Activated CD4-positive, alpha-beta T cell treated with anti-CD3 and anti-CD28 coated beads for 36 hours (primary cell): ENCODE measurements at regions of chr10 and their contacts with region 1.

Region 1: DNA sequence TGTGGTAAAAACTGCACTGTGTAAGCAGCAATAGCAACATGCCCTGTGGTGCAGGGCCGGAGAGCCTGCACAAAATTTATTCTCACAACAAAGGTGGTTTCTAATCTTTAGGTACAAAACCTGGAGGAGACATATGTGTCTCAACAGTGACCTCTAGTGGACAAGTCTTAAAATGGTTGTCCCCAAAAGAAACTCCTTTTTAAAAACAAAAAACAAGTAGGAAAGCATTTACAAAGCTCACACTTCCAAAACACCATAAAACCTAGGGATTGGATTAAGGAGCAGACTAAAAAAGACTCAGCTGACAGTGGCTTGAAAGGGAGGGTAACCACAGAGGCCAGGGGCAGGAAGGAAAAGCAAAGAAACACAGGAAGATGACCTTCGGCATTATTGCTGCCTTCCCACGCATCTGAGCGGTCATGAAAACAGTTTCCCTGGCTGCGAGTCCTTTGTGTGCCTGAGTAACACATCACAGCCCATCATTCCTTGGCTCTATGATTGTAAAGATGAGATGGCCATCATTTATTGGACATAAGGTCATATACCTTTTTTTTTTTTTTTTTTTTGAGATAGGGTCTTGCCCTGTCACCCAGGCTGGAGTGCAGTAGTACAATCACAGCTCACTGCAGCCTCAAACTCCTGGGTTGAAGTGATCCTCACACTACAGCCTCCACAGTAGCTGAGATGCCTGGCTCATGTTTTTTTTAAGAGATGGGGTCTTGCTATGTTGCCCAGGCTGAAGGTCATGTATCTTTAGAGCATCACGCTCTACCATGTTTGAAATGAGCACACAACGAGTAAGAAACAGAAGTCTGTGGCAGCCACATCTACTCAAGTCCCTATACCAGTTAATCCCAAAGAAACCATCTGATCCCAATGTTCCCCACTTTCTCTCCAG is 39.5 kb downstream of the RSU1 start:
- DNase-seq: no peak
- ATAC-seq: no peak
- H3K4me3 Mint-ChIP-seq: no peak overlapping the region
- H3K27ac Mint-ChIP-seq: peak overlapping the region; percentile 76
- H3K4me1 Mint-ChIP-seq: peaks cover 33% of the 10 kb centered on the region
- H3K27me3 Mint-ChIP-seq: no peaks in the 10 kb centered on the region

Region 2: GRCh38 chr10:15433850-15434537 is 1343.7 kb before region 1 on chr10:
- CTCF ChIA-PET with region 1: no interaction called
- POLR2A ChIA-PET with region 1: no interaction called
- intact Hi-C with region 1: loop called in 1 of 2 experiments (anchors 10 kb)
- DNase-seq: peak; percentile 45
- ATAC-seq: peak; percentile 60
- H3K4me3 Mint-ChIP-seq: peak overlapping the region; percentile 64
- H3K27ac Mint-ChIP-seq: no peak overlapping the region
- H3K4me1 Mint-ChIP-seq: peaks cover 4% of the 10 kb centered on the region
- H3K27me3 Mint-ChIP-seq: peaks cover 16% of the 10 kb centered on the region

Region 3: GRCh38 chr10:15901889-15902288 is 875.8 kb before region 1 on chr10:
- CTCF ChIA-PET with region 1: interaction called, 3 read pairs
- POLR2A ChIA-PET with region 1: no interaction called
- intact Hi-C with region 1: loop called (anchors 1 kb)
- DNase-seq: no peak
- ATAC-seq: no peak
- H3K4me3 Mint-ChIP-seq: no peak overlapping the region
- H3K27ac Mint-ChIP-seq: no peak overlapping the region
- H3K4me1 Mint-ChIP-seq: no peaks in the 10 kb centered on the region
- H3K27me3 Mint-ChIP-seq: peaks cover 18% of the 10 kb centered on the region

Region 4: GRCh38 chr10:16182688-16183087 is 595.0 kb before region 1 on chr10:
- CTCF ChIA-PET with region 1: no interaction called
- POLR2A ChIA-PET with region 1: no interaction called
- intact Hi-C with region 1: loop called in 1 of 2 experiments (anchors 10 kb)
- DNase-seq: no peak
- ATAC-seq: no peak
- H3K4me3 Mint-ChIP-seq: no peak overlapping the region
- H3K27ac Mint-ChIP-seq: no peak overlapping the region
- H3K4me1 Mint-ChIP-seq: no peaks in the 10 kb centered on the region
- H3K27me3 Mint-ChIP-seq: no peaks in the 10 kb centered on the region

Region 5: GRCh38 chr10:16436758-16437539 is 340.8 kb before region 1 on chr10 and contains the start of gene PTER:
- CTCF ChIA-PET with region 1: interaction called, 3 read pairs
- POLR2A ChIA-PET with region 1: no interaction called
- intact Hi-C with region 1: loop called (anchors 1 to 5 kb)
- DNase-seq: peak; percentile 99
- ATAC-seq: peak; percentile 99
- H3K4me3 Mint-ChIP-seq: peak within 1 kb of the TSS; percentile 89
- H3K27ac Mint-ChIP-seq: peak within 1 kb of the TSS; percentile 92
- H3K4me1 Mint-ChIP-seq: peaks cover 39% of the 10 kb centered on the region
- H3K27me3 Mint-ChIP-seq: no peaks in the 10 kb centered on the region
- total RNA-seq, gene PTER: 33.1 to 34.5 TPM

Region 6: DNA sequence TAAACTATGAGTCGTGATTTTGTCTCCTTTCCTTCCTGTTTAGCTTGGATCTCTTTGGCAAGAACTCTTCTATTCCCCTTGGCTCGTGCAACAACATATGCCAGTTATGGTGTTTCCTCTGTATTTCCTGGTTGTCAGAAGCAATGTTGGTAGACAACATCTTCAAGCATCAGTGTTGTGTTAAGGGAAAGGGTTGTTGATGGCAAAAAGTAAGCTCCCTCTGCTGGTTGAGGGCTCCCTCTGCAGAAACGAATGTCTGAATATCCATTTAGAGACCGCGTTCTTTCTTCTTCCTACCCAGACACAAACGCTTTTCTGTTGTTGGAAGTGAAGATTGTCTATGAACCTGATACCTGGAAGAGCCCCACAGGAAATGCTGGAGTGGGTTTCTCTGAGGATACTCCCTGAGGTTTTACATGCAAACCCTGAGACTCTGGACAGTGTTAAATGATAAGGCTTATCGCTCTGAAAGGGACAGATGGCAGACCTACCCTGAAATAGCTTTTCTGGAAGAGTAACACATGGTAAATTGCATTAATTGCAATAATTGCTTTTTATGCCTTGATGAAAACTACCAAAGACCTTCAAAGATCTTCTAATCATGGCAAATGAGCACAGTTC is 232.5 kb before region 1 on chr10:
- CTCF ChIA-PET with region 1: no interaction called
- POLR2A ChIA-PET with region 1: no interaction called
- intact Hi-C with region 1: loop called in 1 of 2 experiments (anchors 2 kb)
- DNase-seq: peak; percentile 21
- ATAC-seq: no peak
- H3K4me3 Mint-ChIP-seq: no peak overlapping the region
- H3K27ac Mint-ChIP-seq: no peak overlapping the region
- H3K4me1 Mint-ChIP-seq: no peaks in the 10 kb centered on the region
- H3K27me3 Mint-ChIP-seq: peaks cover 13% of the 10 kb centered on the region

Region 7: DNA sequence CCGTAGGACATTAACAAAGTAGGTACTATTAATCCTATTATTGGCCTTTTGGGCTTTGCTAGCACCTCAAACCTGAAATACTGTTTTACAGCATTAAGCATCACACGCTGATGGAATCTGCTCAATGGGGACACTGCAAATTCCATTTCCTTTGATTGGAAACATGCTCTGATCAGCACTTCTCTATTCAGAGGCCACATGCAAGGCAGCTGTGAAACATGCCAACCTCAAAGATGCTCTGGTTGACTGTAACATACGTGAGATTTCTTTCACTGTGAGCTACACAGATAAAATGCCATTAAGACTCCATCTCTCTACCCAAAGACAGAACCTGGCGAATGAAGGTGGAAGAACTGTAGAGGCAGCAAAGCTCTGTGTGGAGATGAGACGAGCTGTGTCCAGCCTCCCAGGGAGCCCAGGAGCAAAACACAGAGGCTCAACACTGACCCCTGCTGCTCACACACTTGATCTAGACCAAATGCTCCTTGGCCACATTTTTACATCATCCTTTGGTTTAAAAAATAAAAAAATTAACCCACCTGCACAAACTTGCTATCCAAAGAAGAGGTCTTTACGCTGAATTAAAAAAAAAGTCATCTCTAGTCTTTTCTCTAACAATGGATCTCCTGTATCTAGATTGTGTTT is 31.5 kb after region 1 on chr10:
- CTCF ChIA-PET with region 1: interaction called, 5 read pairs
- POLR2A ChIA-PET with region 1: no interaction called
- intact Hi-C with region 1: loop called in 1 of 2 experiments (anchors 2 kb)
- DNase-seq: peak; percentile 79
- ATAC-seq: peak; percentile 94
- H3K4me3 Mint-ChIP-seq: no peak overlapping the region
- H3K27ac Mint-ChIP-seq: no peak overlapping the region
- H3K4me1 Mint-ChIP-seq: peaks cover 9% of the 10 kb centered on the region
- H3K27me3 Mint-ChIP-seq: no peaks in the 10 kb centered on the region